Motor neuron (in vitro differentiated cells): ENCODE measurements at regions of chr9 and their contacts with region 1.

Region 1: GRCh38 chr9:131349881-131350563 is 43.9 kb upstream of the PRRC2B start:
- ATAC-seq: peak; percentile 92 to 100 (median 96)
- H3K4me3 ChIP-seq: peak overlapping the region in 2 of 5 donors; percentile 9 to 28
- H3K27ac ChIP-seq: no peak overlapping the region
- H3K4me1 ChIP-seq: peaks cover 0 to 3% of the 10 kb centered on the region in 2 donors

Region 2: GRCh38 chr9:131046581-131047202 is 303.3 kb before region 1 on chr9:
- in situ Hi-C with region 1: loop called in 2 of 9 experiments (anchors 25 kb)
- ATAC-seq: peak; percentile 84 to 99 (median 92)
- H3K4me3 ChIP-seq: no peak overlapping the region
- H3K27ac ChIP-seq: peak overlapping the region in 1 of 2 donors; percentile 38
- H3K4me1 ChIP-seq: no peaks in the 10 kb centered on the region

Region 3: GRCh38 chr9:131178382-131178781 is 171.6 kb before region 1 on chr9:
- in situ Hi-C with region 1: loop called in 4 of 9 experiments (anchors 25 kb)
- ATAC-seq: peak; percentile 84 to 99 (median 93)
- H3K4me3 ChIP-seq: no peak overlapping the region
- H3K27ac ChIP-seq: peak overlapping the region in 1 of 2 donors; percentile 7
- H3K4me1 ChIP-seq: no peaks in the 10 kb centered on the region

Region 4: DNA sequence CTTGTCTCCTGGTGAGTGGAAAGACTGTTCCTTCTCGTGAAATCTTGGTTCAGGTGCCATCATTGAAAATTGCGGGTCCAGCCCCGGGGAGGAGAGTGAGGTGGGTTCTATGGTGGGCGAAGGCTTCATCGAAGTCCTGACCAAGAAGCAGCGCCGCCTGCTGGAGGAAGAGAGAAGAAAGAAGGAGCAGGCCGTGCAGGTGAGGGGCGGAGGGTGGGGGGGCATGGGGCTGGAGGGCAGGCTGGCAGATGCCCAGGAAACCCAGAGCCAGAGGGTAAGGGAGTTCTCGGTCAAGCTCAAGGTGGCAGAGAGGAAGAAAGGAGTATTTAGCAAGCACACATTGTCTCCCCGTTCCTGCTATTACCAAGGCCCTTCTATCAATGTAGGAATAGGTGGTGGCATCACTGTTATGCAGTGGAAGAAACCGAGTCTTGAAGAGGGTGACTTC is 128.4 kb after region 1 on chr9:
- in situ Hi-C with region 1: loop called in 1 of 9 experiments (anchors 25 kb)
- ATAC-seq: peak in 5 of 8 experiments; percentile 28 to 68 (median 31)
- H3K4me3 ChIP-seq: no peak overlapping the region
- H3K27ac ChIP-seq: no peak overlapping the region
- H3K4me1 ChIP-seq: no peaks in the 10 kb centered on the region

Region 5: DNA sequence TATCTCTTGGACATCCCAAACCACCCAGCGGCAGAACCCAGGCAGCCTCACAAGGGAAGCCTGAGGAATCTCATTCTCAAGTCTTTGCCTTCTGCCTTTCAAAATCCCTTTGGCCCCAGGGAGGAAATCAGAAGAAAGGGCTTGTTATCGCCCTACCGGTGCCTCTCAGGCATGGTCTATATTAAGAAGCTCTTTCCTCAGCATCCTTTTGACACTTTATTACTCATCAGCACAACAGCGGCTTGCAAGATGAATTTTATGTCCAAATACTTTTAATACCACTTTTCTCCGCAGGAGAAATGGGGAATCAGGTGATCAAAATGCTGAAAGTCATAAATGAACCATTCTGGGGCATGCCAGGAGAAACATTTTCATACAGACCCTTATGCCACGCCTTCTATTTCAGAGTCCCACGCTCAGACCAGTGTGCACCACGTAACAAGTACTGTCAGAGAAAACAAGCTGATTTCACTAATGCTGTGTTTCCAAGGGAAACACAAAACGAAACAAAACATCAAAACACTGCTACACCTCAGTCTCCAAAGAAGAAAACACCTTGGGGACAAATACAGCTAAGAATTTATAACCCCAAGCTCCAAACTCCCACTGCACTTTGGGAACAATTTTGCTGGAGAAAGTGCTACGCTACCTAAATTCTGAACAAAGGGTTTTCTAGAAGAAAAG is 359.9 kb after region 1 on chr9:
- in situ Hi-C with region 1: loop called in 1 of 9 experiments (anchors 25 kb)
- ATAC-seq: peak in 5 of 8 experiments; percentile 28 to 65 (median 42)
- H3K4me3 ChIP-seq: no peak overlapping the region
- H3K27ac ChIP-seq: peak overlapping the region in 1 of 2 donors; percentile 16
- H3K4me1 ChIP-seq: peaks cover 6 to 17% of the 10 kb centered on the region in 2 donors